Mammary epithelial cell (primary cell): ENCODE measurements at regions of chr5 and their contacts with region 1.

Region 1: DNA sequence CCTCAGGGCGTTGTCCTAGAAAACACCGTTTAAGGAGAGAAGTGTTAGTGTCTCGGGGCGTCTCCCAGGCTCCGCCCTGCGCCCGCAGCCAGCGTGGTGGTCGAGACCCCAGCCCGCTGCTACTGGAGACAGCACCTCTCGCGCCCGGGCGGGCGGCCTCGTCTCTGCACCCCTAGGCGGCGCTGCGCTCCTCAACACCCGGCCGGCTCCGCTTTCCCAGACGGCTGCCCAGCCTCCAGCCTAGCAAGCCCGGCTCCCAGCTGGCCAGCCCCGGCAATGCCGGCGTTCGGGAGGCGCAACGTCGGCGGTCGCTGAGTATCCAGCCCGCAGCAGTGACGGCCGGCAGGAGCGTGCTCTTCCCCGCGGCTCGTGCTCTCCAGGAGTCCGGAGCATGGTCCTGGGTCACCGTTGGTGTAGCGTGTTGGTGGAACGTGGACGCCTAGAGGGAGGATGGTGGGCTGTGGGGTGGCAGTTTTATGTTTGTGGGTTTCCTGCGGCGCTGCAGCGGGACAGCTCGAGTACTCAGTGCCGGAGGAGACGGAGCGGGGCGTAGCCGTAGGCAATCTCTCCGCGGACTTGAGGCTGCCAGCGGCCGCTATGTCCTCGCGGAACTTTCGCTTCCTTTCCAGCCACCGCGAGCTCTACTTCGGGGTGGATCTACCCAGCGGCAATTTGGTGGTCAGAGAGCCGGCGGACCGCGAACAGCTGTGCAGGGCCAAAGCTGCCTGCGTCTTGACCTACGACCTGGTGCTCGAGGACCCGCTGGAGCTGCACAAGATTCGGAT is 536 bp downstream of the PCDHAC1 start:
- DNase-seq: peak; percentile 70
- H3K4me3 ChIP-seq: peak overlapping the region; percentile 75 to 80 (median 77)
- H3K27ac ChIP-seq: no peak overlapping the region
- H3K4me1 ChIP-seq: peaks cover 18% of the 10 kb centered on the region
- H3K27me3 ChIP-seq: peaks cover 3% of the 10 kb centered on the region
- CTCF ChIP-seq: peak; percentile 80 to 99

Region 2: DNA sequence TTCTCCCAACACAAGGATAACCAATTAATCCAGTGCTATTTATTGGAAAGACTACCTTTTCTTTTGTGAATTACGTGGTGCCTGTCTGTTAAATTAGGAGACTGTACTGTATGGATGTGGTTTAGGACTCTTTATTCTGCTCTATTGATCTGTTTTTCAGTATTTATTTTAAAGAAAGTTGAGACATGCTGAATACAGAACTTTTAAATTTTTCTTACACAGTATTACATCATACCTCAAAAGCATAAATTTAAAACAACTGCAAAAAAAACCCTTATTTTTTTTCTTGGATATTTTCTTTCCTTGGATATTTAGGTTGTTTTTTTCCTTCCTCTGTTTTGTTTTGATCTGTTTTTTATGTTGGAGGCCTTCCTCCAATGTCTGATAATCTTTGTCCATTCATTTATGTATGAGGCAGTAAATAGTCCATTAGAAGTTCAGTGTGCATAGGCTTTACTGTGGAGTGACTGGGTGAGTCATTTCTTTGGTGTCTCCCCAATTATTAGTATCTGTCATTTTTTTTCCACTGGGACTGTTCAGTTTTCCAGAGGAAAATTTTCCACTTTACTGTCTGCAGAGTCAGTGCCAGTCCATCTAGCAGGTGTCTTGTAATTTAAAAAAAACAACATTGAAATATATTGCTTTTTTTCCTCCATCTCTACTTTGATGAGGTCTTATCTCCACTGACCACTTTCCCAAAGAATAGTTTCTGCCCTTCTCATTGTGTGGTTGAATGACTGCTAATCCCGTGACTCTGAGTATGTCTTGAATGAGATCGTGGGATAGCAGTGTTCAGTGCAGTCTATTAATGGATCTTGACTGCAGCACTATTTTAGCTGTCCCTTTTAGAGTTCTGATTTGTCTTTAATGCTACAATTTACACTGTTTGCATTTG is 736.4 kb before region 1 on chr5:
- CTCF ChIA-PET with region 1: no interaction called
- dilution Hi-C with region 1: no loop called
- in situ Hi-C with region 1: no loop called
- intact Hi-C with region 1: no loop called
- DNase-seq: peak; percentile 44
- H3K4me3 ChIP-seq: no peak overlapping the region
- H3K27ac ChIP-seq: no peak overlapping the region
- H3K4me1 ChIP-seq: no peaks in the 10 kb centered on the region
- H3K27me3 ChIP-seq: no peaks in the 10 kb centered on the region
- CTCF ChIP-seq: no peak

Region 3: DNA sequence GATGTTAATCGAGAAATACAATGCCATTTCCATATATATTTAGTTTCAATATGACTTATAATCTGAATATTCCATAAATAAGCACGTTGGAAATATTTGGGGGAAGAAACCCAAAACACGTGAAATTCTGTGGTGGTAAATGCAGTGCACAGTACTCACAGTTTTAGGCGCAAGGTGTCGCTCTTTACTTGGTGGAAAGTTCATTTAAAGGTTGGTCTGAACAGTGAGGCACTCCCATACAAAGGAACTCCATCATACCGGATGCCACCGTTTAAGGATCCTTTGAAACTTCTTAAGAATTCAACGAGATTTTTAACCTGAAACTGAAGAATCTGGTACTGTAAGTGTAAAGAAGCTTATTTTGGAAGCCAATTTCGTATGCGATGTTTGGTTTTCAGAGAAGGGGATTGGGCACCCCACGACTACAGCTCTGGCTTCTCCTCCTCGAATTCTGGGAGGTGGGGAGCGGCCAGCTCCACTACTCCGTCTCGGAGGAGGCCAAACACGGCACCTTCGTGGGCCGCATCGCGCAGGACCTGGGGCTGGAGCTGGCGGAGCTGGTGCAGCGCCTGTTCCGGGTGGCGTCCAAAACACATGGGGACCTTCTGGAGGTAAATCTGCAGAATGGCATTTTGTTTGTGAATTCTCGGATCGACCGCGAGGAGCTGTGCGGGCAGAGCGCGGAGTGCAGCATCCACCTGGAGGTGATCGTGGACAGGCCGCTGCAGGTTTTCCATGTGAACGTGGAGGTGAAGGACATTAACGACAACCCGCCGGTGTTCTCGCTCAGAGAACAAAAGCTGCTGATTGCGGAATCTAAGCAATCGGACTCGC is 57.7 kb before region 1 on chr5 and contains the start of gene PCDHA11:
- CTCF ChIA-PET with region 1: no interaction called
- dilution Hi-C with region 1: no loop called
- in situ Hi-C with region 1: loop called in 1 of 2 experiments (anchors 10 kb)
- intact Hi-C with region 1: loop called (anchors 2 kb)
- DNase-seq: no peak
- H3K4me3 ChIP-seq: peak within 1 kb of the TSS; percentile 41 to 51 (median 43)
- H3K27ac ChIP-seq: no peak within 1 kb of the TSS
- H3K4me1 ChIP-seq: no peaks in the 10 kb centered on the region
- H3K27me3 ChIP-seq: peaks cover 2% of the 10 kb centered on the region
- CTCF ChIP-seq: peak; percentile 48 to 61
- total RNA-seq, gene PCDHA11: 0.21 to 2.0 TPM

Region 4: DNA sequence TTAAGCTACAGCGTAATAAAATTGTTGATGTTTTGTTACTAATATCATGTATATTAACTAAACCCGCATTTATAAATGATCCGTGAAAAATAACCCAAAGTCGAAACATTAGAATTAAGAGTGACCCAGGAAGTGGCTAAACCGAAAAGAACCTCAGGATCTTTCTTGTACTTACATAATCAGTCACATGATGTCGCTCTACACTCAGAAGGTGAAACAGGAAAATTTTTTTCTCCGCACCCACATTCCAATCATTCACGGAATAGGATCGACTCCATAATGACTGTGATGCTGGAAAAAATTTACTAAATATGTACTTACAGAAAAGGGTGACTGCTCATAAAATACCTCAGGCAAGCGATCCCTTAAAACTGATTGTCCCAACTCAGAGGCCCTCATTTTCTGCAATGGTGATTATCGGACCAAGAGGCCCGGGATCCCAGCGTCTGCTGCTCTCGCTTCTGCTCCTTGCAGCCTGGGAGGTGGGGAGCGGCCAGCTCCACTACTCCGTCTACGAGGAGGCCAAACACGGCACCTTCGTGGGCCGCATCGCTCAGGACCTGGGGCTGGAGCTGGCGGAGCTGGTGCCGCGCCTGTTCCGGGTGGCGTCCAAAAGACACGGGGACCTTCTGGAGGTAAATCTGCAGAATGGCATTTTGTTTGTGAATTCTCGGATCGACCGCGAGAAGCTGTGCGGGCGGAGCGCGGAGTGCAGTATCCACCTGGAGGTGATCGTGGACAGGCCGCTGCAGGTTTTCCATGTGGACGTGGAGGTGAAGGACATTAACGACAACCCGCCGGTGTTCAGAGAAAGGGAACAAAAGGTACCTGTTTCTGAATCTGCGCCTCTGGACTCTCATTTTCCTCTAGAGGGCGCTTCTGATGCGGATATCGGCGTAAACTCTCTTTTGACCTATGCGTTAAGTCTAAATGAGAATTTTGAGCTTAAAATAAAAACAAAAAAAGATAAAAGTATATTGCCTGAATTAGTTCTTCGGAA is 51.3 kb before region 1 on chr5 and contains the start of gene PCDHA12:
- CTCF ChIA-PET with region 1: no interaction called
- dilution Hi-C with region 1: no loop called
- in situ Hi-C with region 1: no loop called
- intact Hi-C with region 1: loop called (anchors 2 kb)
- DNase-seq: no peak
- H3K4me3 ChIP-seq: no peak within 1 kb of the TSS
- H3K27ac ChIP-seq: no peak within 1 kb of the TSS
- H3K4me1 ChIP-seq: no peaks in the 10 kb centered on the region
- H3K27me3 ChIP-seq: no peaks in the 10 kb centered on the region
- CTCF ChIP-seq: peak in 1 of 2 donors; percentile 23
- total RNA-seq, gene PCDHA12: 0.45 to 6.8 TPM

Region 5: DNA sequence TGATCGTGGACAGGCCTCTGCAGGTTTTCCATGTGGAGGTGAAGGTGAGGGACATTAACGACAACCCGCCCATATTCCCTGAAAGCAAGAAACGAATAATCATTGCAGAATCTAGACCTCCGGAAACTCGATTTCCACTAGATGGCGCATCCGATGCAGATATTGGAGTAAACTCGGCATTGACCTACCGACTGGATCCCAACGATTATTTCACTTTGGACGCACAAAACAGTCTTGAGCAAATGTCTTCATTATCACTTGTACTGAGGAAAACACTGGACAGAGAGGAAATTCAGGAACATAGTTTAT is 44.1 kb before region 1 on chr5:
- CTCF ChIA-PET with region 1: no interaction called
- dilution Hi-C with region 1: no loop called
- in situ Hi-C with region 1: no loop called
- intact Hi-C with region 1: loop called (anchors 2 kb)
- DNase-seq: peak; percentile 49
- H3K4me3 ChIP-seq: no peak overlapping the region
- H3K27ac ChIP-seq: no peak overlapping the region
- H3K4me1 ChIP-seq: no peaks in the 10 kb centered on the region
- H3K27me3 ChIP-seq: no peaks in the 10 kb centered on the region
- CTCF ChIP-seq: peak in 1 of 2 donors; percentile 40

Region 6: GRCh38 chr5:140953234-140953633 is 26.6 kb after region 1 on chr5:
- CTCF ChIA-PET with region 1: no interaction called
- dilution Hi-C with region 1: no loop called
- in situ Hi-C with region 1: no loop called
- intact Hi-C with region 1: no loop called
- DNase-seq: no peak
- H3K4me3 ChIP-seq: no peak overlapping the region
- H3K27ac ChIP-seq: no peak overlapping the region
- H3K4me1 ChIP-seq: peaks cover 2% of the 10 kb centered on the region
- H3K27me3 ChIP-seq: no peaks in the 10 kb centered on the region
- CTCF ChIP-seq: no peak

Region 7: DNA sequence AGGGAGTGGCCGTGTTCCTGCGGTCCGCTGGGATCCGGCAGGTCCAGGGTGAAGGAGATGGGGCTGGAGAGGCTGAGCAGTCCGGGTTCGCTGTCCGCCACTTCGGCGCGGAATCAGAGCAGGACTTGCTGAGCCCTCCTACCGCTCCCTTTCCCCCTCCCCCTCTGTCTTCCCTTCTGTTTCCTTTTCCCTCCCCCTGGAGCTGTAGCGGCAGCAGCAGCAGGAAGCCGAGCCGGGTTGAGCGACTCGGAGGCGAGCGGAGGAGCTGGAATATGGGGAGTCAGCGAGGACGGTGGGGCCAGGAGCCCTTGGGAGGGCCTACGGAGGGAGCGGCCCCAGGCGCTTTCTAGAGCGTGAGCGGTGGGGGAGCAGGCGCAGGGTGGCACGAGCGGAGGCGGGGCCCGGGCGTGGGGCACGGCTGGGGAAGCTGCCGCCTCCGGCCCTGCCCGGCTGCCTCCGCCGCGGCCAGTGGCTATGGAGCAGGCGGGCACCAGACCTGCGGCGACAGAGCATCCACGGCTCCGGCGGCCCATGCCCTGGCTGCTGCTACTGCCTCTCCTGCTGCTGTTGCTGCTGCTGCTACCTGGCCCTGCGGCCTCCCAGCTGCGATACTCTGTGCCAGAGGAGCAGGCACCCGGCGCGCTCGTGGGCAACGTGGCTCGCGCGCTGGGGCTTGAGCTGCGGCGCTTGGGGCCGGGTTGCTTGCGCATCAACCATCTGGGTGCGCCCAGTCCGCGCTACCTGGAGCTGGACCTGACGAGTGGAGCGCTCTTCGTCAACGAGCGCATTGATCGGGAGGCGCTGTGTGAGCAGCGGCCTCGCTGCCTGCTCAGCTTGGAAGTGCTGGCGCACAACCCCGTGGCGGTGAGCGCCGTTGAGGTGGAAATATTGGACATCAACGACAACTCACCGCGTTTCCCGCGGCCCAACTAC is 39.9 kb after region 1 on chr5 and contains the start of gene PCDHAC2:
- CTCF ChIA-PET with region 1: interaction called, 9 read pairs
- dilution Hi-C with region 1: no loop called
- in situ Hi-C with region 1: no loop called
- intact Hi-C with region 1: loop called (anchors 2 kb)
- DNase-seq: peak; percentile 68
- H3K4me3 ChIP-seq: peak within 1 kb of the TSS; percentile 65 to 74 (median 68)
- H3K27ac ChIP-seq: no peak within 1 kb of the TSS
- H3K4me1 ChIP-seq: peaks cover 10% of the 10 kb centered on the region
- H3K27me3 ChIP-seq: no peaks in the 10 kb centered on the region
- CTCF ChIP-seq: no peak
- total RNA-seq, gene PCDHAC2: 3.7 to 5.8 TPM

Region 8: GRCh38 chr5:140977003-140977402 is 50.4 kb after region 1 on chr5:
- CTCF ChIA-PET with region 1: no interaction called
- dilution Hi-C with region 1: no loop called
- in situ Hi-C with region 1: no loop called
- intact Hi-C with region 1: loop called (anchors 2 kb)
- DNase-seq: peak; percentile 44
- H3K4me3 ChIP-seq: no peak overlapping the region
- H3K27ac ChIP-seq: no peak overlapping the region
- H3K4me1 ChIP-seq: peaks cover 5% of the 10 kb centered on the region
- H3K27me3 ChIP-seq: no peaks in the 10 kb centered on the region
- CTCF ChIP-seq: no peak

Region 9: DNA sequence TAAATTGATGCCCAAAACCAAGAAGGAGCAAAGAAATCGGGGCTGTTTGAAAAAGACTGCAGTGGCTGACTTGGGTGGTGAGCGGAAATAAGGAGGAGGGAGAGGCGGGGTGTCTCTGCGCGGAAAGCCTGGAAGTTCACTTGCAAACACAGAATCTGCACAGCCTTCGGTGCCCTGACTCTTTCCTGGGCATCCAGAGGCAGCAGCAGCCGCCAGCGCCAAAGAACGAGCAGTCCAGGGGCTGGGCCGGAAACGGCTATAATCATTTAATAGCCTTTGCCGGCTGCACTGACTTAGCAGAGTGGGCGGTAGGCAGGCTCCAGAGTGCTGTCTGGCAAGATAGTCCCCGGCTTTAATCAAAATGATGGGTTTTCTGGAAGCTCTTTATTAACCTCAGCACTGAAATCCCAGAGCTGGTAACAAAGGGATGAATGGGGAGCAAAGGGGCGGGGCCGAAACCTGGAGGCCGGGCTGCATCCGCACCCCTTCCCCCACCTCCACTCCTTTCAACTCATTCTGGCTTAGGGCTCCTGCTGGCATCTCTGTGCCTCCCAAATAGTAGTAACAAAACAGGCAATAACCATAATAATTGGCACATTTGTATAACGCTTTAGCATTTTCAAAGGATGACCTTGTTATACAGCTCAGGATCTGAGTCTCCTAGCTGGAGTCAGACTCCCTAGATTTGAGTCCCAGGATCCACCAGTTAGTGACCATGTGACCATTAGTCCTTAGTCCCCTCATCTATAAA is 75.4 kb after region 1 on chr5:
- CTCF ChIA-PET with region 1: no interaction called
- dilution Hi-C with region 1: no loop called
- in situ Hi-C with region 1: no loop called
- intact Hi-C with region 1: loop called (anchors 2 kb)
- DNase-seq: peak; percentile 52
- H3K4me3 ChIP-seq: peak overlapping the region; percentile 39 to 56 (median 51)
- H3K27ac ChIP-seq: peak overlapping the region; percentile 93
- H3K4me1 ChIP-seq: peaks cover 38% of the 10 kb centered on the region
- H3K27me3 ChIP-seq: no peaks in the 10 kb centered on the region
- CTCF ChIP-seq: no peak